Naive thymus-derived CD8-positive, alpha-beta T cell (primary cell): ENCODE measurements at regions of chr4 and their contacts with region 1.

Region 1: GRCh38 chr4:102826890-102827673 is at the start of gene UBE2D3:
- DNase-seq: peak in 9 of 10 donors; percentile 88 to 98 (median 94)
- ATAC-seq: peak; percentile 49
- H3K4me3 Mint-ChIP-seq: no peak within 1 kb of the TSS
- H3K27ac Mint-ChIP-seq: no peak within 1 kb of the TSS
- H3K4me1 Mint-ChIP-seq: peaks cover 19 to 43% (median 38%) of the 10 kb centered on the region in 4 donors
- H3K27me3 Mint-ChIP-seq: peaks cover 0 to 5% (median 0%) of the 10 kb centered on the region in 5 donors
- polyA plus RNA-seq, gene UBE2D3: 415 to 475 (median 426) TPM

Region 2: DNA sequence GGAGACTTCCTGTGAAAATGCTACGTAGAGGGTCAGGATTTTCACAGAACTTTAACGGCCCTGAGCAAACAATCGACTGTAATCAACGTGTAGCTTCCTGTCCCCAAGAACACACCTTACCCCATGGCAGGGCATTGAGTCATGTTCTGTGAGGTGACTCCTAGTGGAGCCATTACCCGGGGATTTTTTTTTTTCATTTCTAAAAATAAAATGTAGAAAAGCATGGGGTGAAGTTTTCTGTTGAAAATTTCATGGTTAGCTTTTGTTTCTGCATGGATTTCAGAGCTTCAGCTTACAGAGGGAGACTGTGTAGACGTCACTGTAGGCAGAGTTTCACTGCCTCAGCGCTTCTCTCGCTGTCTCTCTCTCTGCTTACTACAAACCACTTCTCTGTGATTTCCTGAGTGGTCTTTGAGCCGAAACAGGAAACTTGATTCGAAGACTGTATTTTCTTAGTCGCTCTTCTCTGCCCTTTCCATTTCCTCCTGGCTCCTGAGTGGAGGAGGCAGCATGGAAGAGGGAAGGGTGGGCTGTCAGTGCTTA is 214.2 kb before region 1 on chr4:
- POLR2A ChIA-PET with region 1: interaction called, 19 read pairs
- DNase-seq: peak in 9 of 10 donors; percentile 21 to 81 (median 60)
- ATAC-seq: peak; percentile 83 to 92
- H3K4me3 Mint-ChIP-seq: peak overlapping the region; percentile 78 to 97 (median 86)
- H3K27ac Mint-ChIP-seq: peak overlapping the region; percentile 96 to 100 (median 97)
- H3K4me1 Mint-ChIP-seq: peaks cover 35 to 84% (median 75%) of the 10 kb centered on the region in 4 donors
- H3K27me3 Mint-ChIP-seq: no peaks in the 10 kb centered on the region

Region 3: DNA sequence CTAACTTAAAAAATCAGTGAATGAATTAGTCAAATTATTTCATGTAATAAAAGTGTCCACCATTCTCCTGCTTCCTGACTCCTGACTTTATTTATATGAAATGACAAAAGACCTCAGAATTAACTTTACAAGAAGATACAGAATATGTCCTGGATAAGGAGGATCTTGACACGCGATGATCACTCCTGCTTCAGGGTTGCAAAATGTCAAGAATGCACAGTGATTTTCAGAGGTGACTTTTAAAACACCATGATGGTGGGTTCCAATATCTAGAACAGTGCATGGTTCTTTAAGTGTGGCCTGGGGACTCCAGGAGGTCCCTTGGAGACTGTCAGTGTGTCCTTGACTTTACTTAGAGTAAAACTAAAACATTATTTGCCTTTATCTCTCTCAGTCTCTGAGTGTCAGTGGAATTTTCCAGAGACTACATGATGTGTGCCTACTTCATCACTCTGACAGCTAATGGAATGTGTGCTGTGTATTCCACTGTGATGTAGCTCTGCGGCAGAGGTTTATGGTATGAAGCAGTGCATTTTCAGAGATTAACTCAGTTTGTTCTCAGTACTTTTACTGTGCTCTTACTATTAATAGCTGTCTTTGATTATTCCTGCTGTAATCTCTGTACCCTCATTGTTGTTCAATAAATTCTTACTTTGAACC is 152.1 kb before region 1 on chr4:
- POLR2A ChIA-PET with region 1: no interaction called
- DNase-seq: no peak
- ATAC-seq: no peak
- H3K4me3 Mint-ChIP-seq: no peak overlapping the region
- H3K27ac Mint-ChIP-seq: peak overlapping the region in 1 of 10 donors; percentile 44
- H3K4me1 Mint-ChIP-seq: peaks cover 2 to 9% (median 8%) of the 10 kb centered on the region in 4 donors
- H3K27me3 Mint-ChIP-seq: no peaks in the 10 kb centered on the region

Region 4: GRCh38 chr4:102760645-102761295 is 66.3 kb before region 1 on chr4 and contains the start of gene MANBA:
- POLR2A ChIA-PET with region 1: interaction called, 76 read pairs
- DNase-seq: peak; percentile 66 to 91 (median 78)
- ATAC-seq: peak; percentile 82 to 90
- H3K4me3 Mint-ChIP-seq: peak within 1 kb of the TSS; percentile 86 to 100 (median 97)
- H3K27ac Mint-ChIP-seq: peak within 1 kb of the TSS; percentile 90 to 96 (median 94)
- H3K4me1 Mint-ChIP-seq: peaks cover 27 to 49% (median 44%) of the 10 kb centered on the region in 4 donors
- H3K27me3 Mint-ChIP-seq: peaks cover 0 to 3% (median 0%) of the 10 kb centered on the region in 5 donors
- polyA plus RNA-seq, gene MANBA: 16.7 to 17.8 (median 17.1) TPM

Region 5: GRCh38 chr4:102815981-102816380 is 11.1 kb before region 1 on chr4:
- POLR2A ChIA-PET with region 1: interaction called, 89 read pairs
- DNase-seq: no peak
- ATAC-seq: no peak
- H3K4me3 Mint-ChIP-seq: peak overlapping the region in 9 of 10 donors; percentile 9 to 81 (median 60)
- H3K27ac Mint-ChIP-seq: peak overlapping the region in 9 of 10 donors; percentile 12 to 84 (median 71)
- H3K4me1 Mint-ChIP-seq: peaks cover 44 to 93% (median 90%) of the 10 kb centered on the region in 4 donors
- H3K27me3 Mint-ChIP-seq: no peaks in the 10 kb centered on the region

Region 6: GRCh38 chr4:103019308-103020124 is 192.4 kb after region 1 on chr4 and contains the start of gene SLC9B1:
- POLR2A ChIA-PET with region 1: interaction called, 11 read pairs
- DNase-seq: peak; percentile 88 to 96 (median 92)
- ATAC-seq: peak; percentile 95 to 96
- H3K4me3 Mint-ChIP-seq: peak within 1 kb of the TSS; percentile 86 to 96 (median 92)
- H3K27ac Mint-ChIP-seq: peak within 1 kb of the TSS in 5 of 10 donors; percentile 96 to 100 (median 99)
- H3K4me1 Mint-ChIP-seq: peaks cover 4 to 27% (median 19%) of the 10 kb centered on the region in 4 donors
- H3K27me3 Mint-ChIP-seq: no peaks in the 10 kb centered on the region
- polyA plus RNA-seq, gene SLC9B1: 1.7 to 3.7 (median 1.9) TPM